ENCODE measurements at regions of chr3 and their contacts with region 1.

Region 1: DNA sequence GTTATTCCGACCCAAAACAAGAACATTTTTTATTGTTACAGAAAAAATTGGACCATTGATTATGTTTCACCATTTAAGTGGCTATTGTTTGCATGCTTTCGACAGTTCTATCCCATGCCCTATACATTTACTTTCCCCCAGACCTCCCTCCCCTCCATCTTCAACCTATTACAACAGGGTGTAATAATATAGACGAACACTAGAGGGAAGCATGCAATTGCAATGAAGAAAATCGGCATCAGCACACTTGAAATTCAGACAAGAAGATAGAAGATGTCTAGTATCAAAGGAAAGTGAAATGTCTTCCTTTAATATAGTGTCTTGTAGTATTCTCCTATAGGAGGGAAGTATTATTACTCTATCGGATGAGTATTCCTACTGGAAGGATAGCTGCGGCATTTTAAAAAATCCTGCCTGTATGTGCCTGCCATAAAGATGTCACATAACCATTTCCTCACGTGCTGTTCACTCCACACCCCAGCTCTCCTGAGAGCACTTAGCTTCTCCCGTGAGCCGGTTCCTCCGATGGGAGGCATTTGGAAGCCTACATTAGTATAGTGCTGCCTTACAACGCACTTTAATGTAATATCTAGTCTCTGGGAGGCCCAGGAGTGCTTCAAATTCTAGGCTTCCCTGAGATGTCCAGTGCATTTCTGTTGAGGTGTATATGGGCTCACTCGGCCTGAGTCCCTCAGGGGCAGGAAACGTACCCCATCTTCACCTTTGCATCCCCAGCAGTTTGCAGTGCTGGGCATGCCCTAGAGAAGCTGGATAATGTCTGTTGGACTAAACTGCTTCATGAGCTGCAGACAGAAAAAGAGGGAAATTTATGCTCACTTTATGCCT is 17.8 kb upstream of the ERICH6 start:
- DNase-seq: peak; percentile 65
- H3K4me3 Mint-ChIP-seq: no peak overlapping the region
- H3K27ac Mint-ChIP-seq: no peak overlapping the region
- H3K4me1 Mint-ChIP-seq: peaks cover 16% of the 10 kb centered on the region
- H3K27me3 Mint-ChIP-seq: no peaks in the 10 kb centered on the region
- CTCF ChIP-seq: peak; percentile 77

Region 2: GRCh38 chr3:150603153-150603979 is 118.1 kb before region 1 on chr3 and contains the start of gene SELENOT:
- CTCF ChIA-PET with region 1: no interaction called
- POLR2A ChIA-PET with region 1: no interaction called
- intact Hi-C with region 1: no loop called
- DNase-seq: peak; percentile 97
- H3K4me3 Mint-ChIP-seq: peak within 1 kb of the TSS; percentile 92
- H3K27ac Mint-ChIP-seq: peak within 1 kb of the TSS; percentile 93
- H3K4me1 Mint-ChIP-seq: peaks cover 39% of the 10 kb centered on the region
- H3K27me3 Mint-ChIP-seq: no peaks in the 10 kb centered on the region
- CTCF ChIP-seq: peak; percentile 13
- total RNA-seq, gene SELENOT: 71.1 and 80.7 TPM in 2 replicates

Region 3: GRCh38 chr3:150635526-150635925 is 86.0 kb before region 1 on chr3:
- CTCF ChIA-PET with region 1: no interaction called
- POLR2A ChIA-PET with region 1: no interaction called
- intact Hi-C with region 1: no loop called
- DNase-seq: no peak
- H3K4me3 Mint-ChIP-seq: no peak overlapping the region
- H3K27ac Mint-ChIP-seq: no peak overlapping the region
- H3K4me1 Mint-ChIP-seq: no peaks in the 10 kb centered on the region
- H3K27me3 Mint-ChIP-seq: no peaks in the 10 kb centered on the region
- CTCF ChIP-seq: no peak

Region 4: GRCh38 chr3:150710097-150710496 is 11.4 kb before region 1 on chr3:
- CTCF ChIA-PET with region 1: interaction called, 14 read pairs
- POLR2A ChIA-PET with region 1: interaction called, 4 read pairs
- intact Hi-C with region 1: no loop called
- DNase-seq: no peak
- H3K4me3 Mint-ChIP-seq: no peak overlapping the region
- H3K27ac Mint-ChIP-seq: no peak overlapping the region
- H3K4me1 Mint-ChIP-seq: peaks cover 4% of the 10 kb centered on the region
- H3K27me3 Mint-ChIP-seq: no peaks in the 10 kb centered on the region
- CTCF ChIP-seq: no peak

Region 5: DNA sequence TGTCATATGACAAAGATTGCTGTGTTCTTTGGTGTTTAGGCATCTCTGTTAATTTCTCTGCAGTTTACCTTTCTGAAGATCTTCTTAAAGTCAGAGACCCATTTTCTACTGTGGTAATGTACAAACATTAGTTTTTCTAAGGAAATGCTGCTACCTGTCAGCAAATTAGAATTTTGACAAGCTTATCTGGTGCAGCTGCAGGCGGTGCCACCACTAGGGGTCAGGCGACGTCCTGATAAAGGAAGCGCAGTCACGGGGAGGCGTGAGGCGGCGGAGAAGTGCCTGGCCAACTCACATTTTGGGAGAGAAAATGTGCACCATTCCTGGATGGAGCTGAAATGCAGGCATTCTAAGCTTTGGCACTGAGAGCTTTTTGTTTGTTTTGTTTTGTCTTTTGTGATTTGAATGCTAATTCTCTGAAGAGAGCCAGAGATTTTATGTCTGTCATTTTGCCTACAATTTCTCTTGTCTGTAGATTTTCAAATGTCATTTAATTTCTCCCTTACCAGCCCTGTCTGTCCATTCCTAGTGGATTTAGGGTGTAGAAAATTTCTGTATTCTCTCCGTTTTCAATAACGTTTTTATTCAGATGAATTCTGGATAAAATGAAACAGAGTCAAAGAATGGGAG is 66.3 kb after region 1 on chr3:
- CTCF ChIA-PET with region 1: interaction called, 7 read pairs
- POLR2A ChIA-PET with region 1: no interaction called
- intact Hi-C with region 1: loop called (anchors 2 kb)
- DNase-seq: peak; percentile 57
- H3K4me3 Mint-ChIP-seq: no peak overlapping the region
- H3K27ac Mint-ChIP-seq: no peak overlapping the region
- H3K4me1 Mint-ChIP-seq: peaks cover 8% of the 10 kb centered on the region
- H3K27me3 Mint-ChIP-seq: no peaks in the 10 kb centered on the region
- CTCF ChIP-seq: peak; percentile 52

Region 6: GRCh38 chr3:150870396-150870795 is 148.9 kb after region 1 on chr3:
- CTCF ChIA-PET with region 1: interaction called, 55 read pairs
- POLR2A ChIA-PET with region 1: interaction called, 5 read pairs
- intact Hi-C with region 1: loop called (anchors 1 kb)
- DNase-seq: no peak
- H3K4me3 Mint-ChIP-seq: no peak overlapping the region
- H3K27ac Mint-ChIP-seq: no peak overlapping the region
- H3K4me1 Mint-ChIP-seq: peaks cover 2% of the 10 kb centered on the region
- H3K27me3 Mint-ChIP-seq: no peaks in the 10 kb centered on the region
- CTCF ChIP-seq: no peak